ENCODE measurements at regions of chr12 and their contacts with region 1.

Region 1: DNA sequence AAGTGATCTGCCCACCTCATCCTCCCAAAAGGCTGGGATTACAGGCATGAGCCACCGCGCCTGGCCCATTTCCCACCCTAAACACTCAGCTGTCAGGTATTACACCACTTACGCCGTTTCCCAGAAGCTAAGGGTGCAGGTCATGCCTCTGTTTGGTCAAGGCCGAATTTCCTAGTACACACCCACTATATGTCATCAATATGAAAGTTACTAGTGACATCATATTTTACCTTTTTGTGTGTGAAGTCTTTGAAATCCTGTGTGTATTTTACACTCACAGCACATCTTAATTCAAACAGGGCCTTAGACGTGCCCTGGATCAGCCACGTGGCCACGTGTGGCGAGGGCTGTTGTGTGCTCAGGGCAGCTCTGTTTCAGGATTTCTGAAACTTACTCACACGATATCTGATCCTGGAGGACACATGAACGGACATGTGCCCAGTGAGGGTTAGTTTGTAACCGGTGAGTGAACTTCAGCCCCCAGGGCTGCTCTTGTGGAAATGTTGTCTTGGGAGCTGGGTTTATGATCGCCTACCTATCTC is 51.8 kb downstream of the GLT1D1 start:
- DNase-seq: peak in 1 of 2 experiments; percentile 34
- H3K4me3 ChIP-seq: no peak overlapping the region
- H3K4me3 Mint-ChIP-seq: no peak overlapping the region
- H3K27ac Mint-ChIP-seq: no peak overlapping the region
- H3K4me1 ChIP-seq: peaks cover 22% of the 10 kb centered on the region
- H3K4me1 Mint-ChIP-seq: peaks cover 17% of the 10 kb centered on the region
- H3K27me3 ChIP-seq: no peaks in the 10 kb centered on the region
- H3K27me3 Mint-ChIP-seq: no peaks in the 10 kb centered on the region
- CTCF ChIP-seq: no peak

Region 2: GRCh38 chr12:128861226-128862016 is 43.7 kb before region 1 on chr12:
- CTCF ChIA-PET with region 1: no interaction called
- POLR2A ChIA-PET with region 1: no interaction called
- intact Hi-C with region 1: loop called (anchors 2 kb)
- DNase-seq: peak; percentile 72 to 80
- H3K4me3 ChIP-seq: no peak overlapping the region
- H3K4me3 Mint-ChIP-seq: peak overlapping the region; percentile 46
- H3K27ac Mint-ChIP-seq: peak overlapping the region; percentile 31
- H3K4me1 ChIP-seq: peaks cover 19% of the 10 kb centered on the region
- H3K4me1 Mint-ChIP-seq: peaks cover 7% of the 10 kb centered on the region
- H3K27me3 ChIP-seq: no peaks in the 10 kb centered on the region
- H3K27me3 Mint-ChIP-seq: no peaks in the 10 kb centered on the region
- CTCF ChIP-seq: no peak